Left colon (tissue), 2 donors: ENCODE measurements at regions of chr21 and their contacts with region 1.

Region 1: GRCh38 chr21:14712121-14712723 is 166.1 kb upstream of the SAMSN1 start:
- DNase-seq: no peak
- ATAC-seq: no peak

Region 2: GRCh38 chr21:14523234-14523633 is 189.0 kb before region 1 on chr21:
- intact Hi-C with region 1: no loop called
- DNase-seq: peak in 1 of 2 donors; percentile 15
- ATAC-seq: no peak

Region 3: GRCh38 chr21:14773777-14774345 is 61.6 kb after region 1 on chr21:
- intact Hi-C with region 1: loop called in 1 of 2 experiments (anchors 10 kb)
- DNase-seq: peak; percentile 50 to 87
- ATAC-seq: peak; percentile 91